Activated CD4-positive, alpha-beta memory T cell treated with anti-CD3 and anti-CD28 coated beads, Interleukin-2, amount 10 ng/mL, durations not matched to agents 7 days and 5 days (primary cell): ENCODE measurements at regions of chr5 and their contacts with region 1.

Region 1: DNA sequence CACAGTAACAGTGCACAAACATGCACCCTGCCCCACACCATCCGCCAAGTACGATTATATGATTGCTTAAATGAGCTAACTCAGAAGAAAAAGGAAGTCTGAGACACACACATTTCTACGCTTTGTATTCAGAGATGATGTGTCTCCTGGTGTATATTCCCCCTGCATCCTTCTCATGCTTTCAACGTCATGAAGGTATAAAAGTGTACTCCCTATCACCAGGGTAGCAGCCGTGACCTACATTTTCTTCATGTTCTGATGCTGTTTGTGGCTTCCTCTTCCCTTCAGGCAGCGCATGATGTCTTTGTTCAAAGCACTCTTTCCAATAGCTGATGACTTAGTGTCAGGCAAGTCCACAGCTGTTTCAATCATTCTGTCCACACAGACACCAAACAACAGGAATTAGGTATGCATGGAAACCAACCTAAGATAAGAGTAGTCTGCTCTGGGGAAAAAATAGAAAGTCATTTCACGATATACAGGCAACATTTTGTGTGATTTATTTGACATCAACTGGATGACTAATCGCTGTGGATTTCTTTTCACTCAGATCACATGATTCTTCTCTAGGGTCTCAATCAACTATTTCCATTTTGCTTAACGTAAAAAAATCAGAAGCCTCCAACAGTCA is 269.4 kb upstream of the PTGER4 start:
- DNase-seq: peak; percentile 76
- H3K4me3 Mint-ChIP-seq: peak overlapping the region; percentile 63
- H3K27ac Mint-ChIP-seq: peak overlapping the region; percentile 90
- H3K4me1 Mint-ChIP-seq: peaks cover 55% of the 10 kb centered on the region
- H3K27me3 Mint-ChIP-seq: no peaks in the 10 kb centered on the region

Region 2: DNA sequence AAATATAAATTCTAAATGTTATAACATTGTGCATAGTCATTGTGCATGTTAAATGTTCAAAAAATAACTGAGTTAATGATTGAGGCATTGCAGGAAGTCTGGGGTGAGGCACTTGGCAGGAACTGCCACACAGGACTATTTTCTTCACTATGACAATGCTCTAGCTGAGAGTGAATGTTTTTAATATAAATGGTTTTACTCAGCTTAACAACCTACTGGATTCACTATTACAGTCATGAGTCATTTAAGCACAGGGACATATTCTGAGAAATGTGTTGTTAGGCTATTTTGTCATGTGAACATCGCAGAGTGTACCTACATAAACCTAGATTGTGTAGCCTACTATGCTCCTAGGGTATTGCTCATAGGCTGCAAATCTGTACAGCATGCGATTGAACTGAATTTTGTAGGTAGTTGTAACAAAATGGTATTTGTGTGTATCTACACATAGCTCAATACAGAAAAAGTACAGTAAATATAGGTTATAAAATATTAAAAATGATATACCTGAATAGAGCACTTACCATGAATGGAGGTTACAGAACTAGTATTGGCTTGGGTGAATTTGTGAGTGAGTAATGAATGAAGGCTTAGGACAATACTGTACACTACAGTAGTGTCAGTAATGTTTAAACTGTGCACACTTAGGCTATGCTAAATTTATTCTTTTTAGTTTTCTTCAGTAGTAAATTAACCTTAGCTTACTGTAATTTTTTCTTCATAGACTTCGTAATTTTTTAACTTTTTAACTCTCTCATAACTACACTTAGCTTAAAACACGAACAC is 76.7 kb before region 1 on chr5:
- CTCF ChIA-PET with region 1: no interaction called
- POLR2A ChIA-PET with region 1: interaction called, 16 read pairs
- DNase-seq: peak; percentile 28
- H3K4me3 Mint-ChIP-seq: no peak overlapping the region
- H3K27ac Mint-ChIP-seq: peak overlapping the region; percentile 44
- H3K4me1 Mint-ChIP-seq: peaks cover 53% of the 10 kb centered on the region
- H3K27me3 Mint-ChIP-seq: no peaks in the 10 kb centered on the region

Region 3: DNA sequence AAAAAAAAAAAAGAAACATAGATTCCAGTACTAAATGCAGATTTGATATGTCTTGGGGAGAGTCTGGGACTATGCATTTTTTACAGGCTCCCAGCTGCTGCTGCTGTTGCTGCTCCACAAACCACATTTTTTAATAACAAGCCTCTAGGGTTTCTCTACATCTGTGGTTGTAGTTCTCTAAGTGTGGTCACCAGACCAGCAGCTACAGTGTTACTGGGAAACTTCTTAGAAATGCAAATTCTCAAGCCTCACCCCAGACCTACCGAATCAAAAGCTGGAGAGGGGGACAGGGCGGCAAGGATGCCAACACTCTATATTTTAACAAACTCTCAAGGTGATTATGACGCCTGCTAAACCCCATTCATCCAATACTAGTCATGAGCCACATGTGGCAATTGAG is 24.1 kb before region 1 on chr5:
- CTCF ChIA-PET with region 1: interaction called, 5 read pairs
- POLR2A ChIA-PET with region 1: interaction called, 41 read pairs
- DNase-seq: peak; percentile 52
- H3K4me3 Mint-ChIP-seq: no peak overlapping the region
- H3K27ac Mint-ChIP-seq: peak overlapping the region; percentile 53
- H3K4me1 Mint-ChIP-seq: peaks cover 87% of the 10 kb centered on the region
- H3K27me3 Mint-ChIP-seq: no peaks in the 10 kb centered on the region

Region 4: DNA sequence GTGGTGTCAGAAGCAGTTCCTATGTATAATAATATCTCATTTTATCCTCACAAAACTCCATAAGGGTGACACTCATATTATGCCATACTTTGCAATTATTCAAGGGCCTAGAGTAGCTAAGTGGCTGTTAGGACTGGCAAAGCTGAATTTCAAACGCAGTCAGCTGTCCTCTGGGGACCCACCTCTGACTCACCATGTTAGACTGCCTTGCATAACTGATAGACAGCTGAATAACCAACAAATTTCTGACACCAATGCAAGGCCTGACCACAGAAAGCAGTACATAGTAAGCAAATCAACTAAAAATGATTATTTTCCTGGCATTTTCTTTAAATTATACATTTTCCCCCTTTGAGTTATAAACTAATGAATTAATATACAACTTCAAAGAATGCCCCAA is 17.8 kb after region 1 on chr5:
- CTCF ChIA-PET with region 1: interaction called, 4 read pairs
- POLR2A ChIA-PET with region 1: interaction called, 91 read pairs
- DNase-seq: peak; percentile 43
- H3K4me3 Mint-ChIP-seq: no peak overlapping the region
- H3K27ac Mint-ChIP-seq: peak overlapping the region; percentile 84
- H3K4me1 Mint-ChIP-seq: peaks cover 44% of the 10 kb centered on the region
- H3K27me3 Mint-ChIP-seq: no peaks in the 10 kb centered on the region